ENCODE measurements at regions of chr3 and their contacts with region 1.

Region 1: DNA sequence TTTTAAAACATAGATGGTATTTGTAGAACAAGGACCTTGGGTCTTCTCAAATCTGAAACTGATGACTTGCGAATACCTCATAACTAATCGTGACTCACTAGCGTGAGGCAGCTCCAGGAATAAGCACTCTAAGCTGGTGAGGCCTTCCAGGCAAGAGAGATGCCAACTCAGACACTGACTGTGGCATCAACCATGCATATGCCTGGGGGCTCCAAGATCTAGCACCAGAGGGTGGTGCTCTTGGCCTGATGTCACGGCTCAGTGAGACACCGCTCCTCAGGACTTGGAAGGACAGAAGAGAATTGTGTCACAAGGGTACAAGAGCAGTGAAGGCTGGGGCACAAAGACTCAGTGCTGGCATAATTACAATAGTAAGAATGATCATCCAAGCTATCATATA is 125.0 kb upstream of the TRIM42 start:
- DNase-seq: peak; percentile 12
- ATAC-seq: peak; percentile 59
- H3K4me3 ChIP-seq: no peak overlapping the region
- H3K27ac ChIP-seq: no peak overlapping the region
- H3K4me1 ChIP-seq: no peaks in the 10 kb centered on the region
- H3K27me3 ChIP-seq: no peaks in the 10 kb centered on the region
- CTCF ChIP-seq: peak; percentile 58
- EP300 ChIP-seq: no peak
- POLR2A ChIP-seq: no peak
- RAD21 ChIP-seq: no peak

Region 2: GRCh38 chr3:140568842-140569520 is 16.1 kb after region 1 on chr3:
- CTCF ChIA-PET with region 1: no interaction called
- POLR2A ChIA-PET with region 1: no interaction called
- in situ Hi-C with region 1: no loop called
- intact Hi-C with region 1: no loop called
- DNase-seq: no peak
- ATAC-seq: no peak
- H3K4me3 ChIP-seq: no peak overlapping the region
- H3K27ac ChIP-seq: no peak overlapping the region
- H3K4me1 ChIP-seq: no peaks in the 10 kb centered on the region
- H3K27me3 ChIP-seq: no peaks in the 10 kb centered on the region
- CTCF ChIP-seq: no peak
- EP300 ChIP-seq: no peak
- POLR2A ChIP-seq: no peak
- RAD21 ChIP-seq: no peak

Region 3: DNA sequence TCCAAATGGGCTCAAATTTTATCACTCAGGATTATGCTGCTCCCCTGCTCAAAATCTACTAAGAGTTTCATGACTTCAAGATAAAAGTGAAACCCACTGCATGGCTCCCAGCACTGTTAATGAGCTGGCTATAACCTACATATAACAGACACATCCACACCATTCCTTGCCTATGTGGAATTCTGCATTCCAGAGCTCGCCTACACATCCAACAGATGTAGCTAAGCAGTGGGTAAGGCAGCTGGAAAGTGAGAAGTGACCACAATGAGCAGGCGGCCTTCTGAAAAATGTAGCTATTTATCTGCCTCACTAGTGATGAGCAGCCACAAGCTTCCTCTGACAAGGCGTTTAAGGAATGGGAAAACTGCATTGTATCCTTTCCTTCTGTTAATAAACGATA is 32.9 kb after region 1 on chr3:
- CTCF ChIA-PET with region 1: no interaction called
- POLR2A ChIA-PET with region 1: no interaction called
- in situ Hi-C with region 1: no loop called
- intact Hi-C with region 1: no loop called
- DNase-seq: no peak
- ATAC-seq: no peak
- H3K4me3 ChIP-seq: no peak overlapping the region
- H3K27ac ChIP-seq: no peak overlapping the region
- H3K4me1 ChIP-seq: no peaks in the 10 kb centered on the region
- H3K27me3 ChIP-seq: no peaks in the 10 kb centered on the region
- CTCF ChIP-seq: no peak
- EP300 ChIP-seq: no peak
- POLR2A ChIP-seq: no peak
- RAD21 ChIP-seq: no peak

Region 4: DNA sequence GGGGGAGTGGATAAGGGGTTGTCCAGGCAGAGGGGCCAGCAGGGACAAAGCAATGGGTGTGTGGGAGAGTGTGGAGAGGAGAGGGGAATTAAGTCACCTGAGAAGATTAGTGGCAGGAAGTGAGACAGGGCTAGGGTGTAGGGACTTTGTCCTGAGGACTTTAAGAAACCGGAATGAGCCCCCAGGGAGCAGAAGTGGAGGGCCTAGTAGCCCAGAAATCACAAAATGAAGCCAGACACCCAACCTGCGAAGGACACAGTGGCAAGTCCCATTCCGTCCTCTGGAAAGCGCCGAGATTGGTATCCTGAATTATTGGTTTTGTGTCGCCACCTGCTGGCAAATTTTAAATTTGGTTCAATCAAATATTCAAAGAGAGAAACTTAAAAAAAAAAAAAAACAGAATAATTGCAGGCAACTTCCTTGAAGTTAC is 310.7 kb after region 1 on chr3:
- CTCF ChIA-PET with region 1: no interaction called
- POLR2A ChIA-PET with region 1: no interaction called
- in situ Hi-C with region 1: loop called (anchors 25 kb)
- intact Hi-C with region 1: loop called (anchors 10 kb)
- DNase-seq: peak; percentile 49
- ATAC-seq: peak; percentile 82
- H3K4me3 ChIP-seq: no peak overlapping the region
- H3K27ac ChIP-seq: no peak overlapping the region
- H3K4me1 ChIP-seq: no peaks in the 10 kb centered on the region
- H3K27me3 ChIP-seq: peaks cover 0 to 2% of the 10 kb centered on the region in 2 experiments; a peak in 1 of 5 replicates
- CTCF ChIP-seq: peak; percentile 64
- EP300 ChIP-seq: no peak
- POLR2A ChIP-seq: no peak
- RAD21 ChIP-seq: peak; percentile 38; the same call in 1 of the 2 replicates

Region 5: DNA sequence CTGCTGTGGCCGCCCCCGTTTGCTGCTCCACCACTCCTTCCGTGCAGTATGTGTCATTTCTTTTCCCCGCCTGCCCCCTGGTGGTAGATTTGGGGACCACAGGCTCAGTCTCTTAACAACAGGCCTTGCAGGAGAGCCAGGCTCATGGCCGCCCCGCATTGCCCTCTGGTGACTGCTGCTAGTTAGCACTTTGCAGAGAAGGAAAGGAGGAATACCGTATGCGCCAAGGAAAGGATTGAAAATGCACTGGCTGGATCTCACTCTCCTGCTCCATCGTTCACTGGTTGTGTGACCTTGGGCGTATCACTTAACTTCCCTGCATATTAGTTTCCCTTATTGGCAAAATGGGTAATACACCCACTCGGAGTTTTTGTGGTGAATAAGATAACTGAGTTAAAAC is 639.4 kb after region 1 on chr3:
- CTCF ChIA-PET with region 1: no interaction called
- POLR2A ChIA-PET with region 1: no interaction called
- in situ Hi-C with region 1: no loop called
- intact Hi-C with region 1: no loop called
- DNase-seq: peak; percentile 87
- ATAC-seq: peak; percentile 99
- H3K4me3 ChIP-seq: no peak overlapping the region
- H3K27ac ChIP-seq: no peak overlapping the region
- H3K4me1 ChIP-seq: no peaks in the 10 kb centered on the region
- H3K27me3 ChIP-seq: peaks cover 0 to 17% of the 10 kb centered on the region in 2 experiments; a peak in 2 of 5 replicates
- CTCF ChIP-seq: peak; percentile 99
- EP300 ChIP-seq: no peak
- POLR2A ChIP-seq: no peak
- RAD21 ChIP-seq: peak; percentile 95